ENCODE measurements at regions of chr16 and their contacts with region 1.

Region 1: GRCh38 chr16:57600048-57600835 is 28.2 kb upstream of the ADGRG1 start:
- DNase-seq: peak; percentile 45 to 52
- ATAC-seq: peak; percentile 58 to 94 (median 86)
- H3K4me3 ChIP-seq: no peak overlapping the region
- H3K27ac ChIP-seq: peak overlapping the region in 1 of 10 donors; percentile 75
- H3K4me1 ChIP-seq: peaks cover 0 to 36% (median 0%) of the 10 kb centered on the region in 9 donors
- H3K27me3 ChIP-seq: peaks cover 0 to 28% (median 0%) of the 10 kb centered on the region in 7 donors
- CTCF ChIP-seq: peak; percentile 52 to 80 (median 72)

Region 2: DNA sequence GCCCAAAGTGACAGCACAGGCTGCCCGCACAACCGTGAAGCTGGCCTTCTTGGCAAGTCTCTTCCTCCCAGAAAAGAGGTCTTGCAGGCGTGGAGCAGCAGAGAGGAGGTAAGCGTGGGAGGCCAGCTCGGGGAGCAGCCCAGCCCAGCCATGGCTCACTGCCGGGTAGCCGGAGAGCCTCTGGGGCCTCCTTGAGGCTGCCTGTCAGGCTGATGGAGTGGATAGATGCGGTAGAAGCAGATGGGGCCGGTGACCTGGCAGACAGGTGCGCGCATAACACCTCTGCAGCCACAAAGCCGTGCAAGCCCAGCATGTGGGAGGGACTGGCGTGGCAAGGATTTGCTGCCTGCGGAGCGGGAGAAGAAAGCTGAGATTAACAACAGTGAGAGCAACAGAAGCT is 96.9 kb before region 1 on chr16:
- intact Hi-C with region 1: no loop called
- DNase-seq: no peak
- ATAC-seq: peak in 1 of 8 donors; percentile 37
- H3K4me3 ChIP-seq: no peak overlapping the region
- H3K27ac ChIP-seq: no peak overlapping the region
- H3K4me1 ChIP-seq: peaks cover 0 to 13% (median 0%) of the 10 kb centered on the region in 9 donors
- H3K27me3 ChIP-seq: no peaks in the 10 kb centered on the region
- CTCF ChIP-seq: no peak

Region 3: GRCh38 chr16:57648590-57649442 is 48.6 kb after region 1 on chr16:
- intact Hi-C with region 1: loop called in 5 of 10 experiments (anchors 2 to 5 kb)
- DNase-seq: peak; percentile 73 to 79
- ATAC-seq: peak; percentile 32 to 50 (median 45)
- H3K4me3 ChIP-seq: peak overlapping the region in 1 of 10 donors; percentile 4
- H3K27ac ChIP-seq: peak overlapping the region; percentile 78 to 93 (median 86)
- H3K4me1 ChIP-seq: peaks cover 9 to 58% (median 39%) of the 10 kb centered on the region in 9 donors
- H3K27me3 ChIP-seq: peaks cover 0 to 14% (median 0%) of the 10 kb centered on the region in 7 donors
- CTCF ChIP-seq: peak; percentile 99 to 100 (median 100)

Region 4: GRCh38 chr16:57653936-57654335 is 53.7 kb after region 1 on chr16:
- intact Hi-C with region 1: loop called in 5 of 10 experiments (anchors 2 to 5 kb)
- DNase-seq: no peak
- ATAC-seq: peak in 6 of 8 donors; percentile 21 to 71 (median 51)
- H3K4me3 ChIP-seq: no peak overlapping the region
- H3K27ac ChIP-seq: peak overlapping the region in 1 of 10 donors; percentile 54
- H3K4me1 ChIP-seq: peaks cover 0 to 14% (median under 1%) of the 10 kb centered on the region in 9 donors
- H3K27me3 ChIP-seq: peaks cover 0 to 4% (median 0%) of the 10 kb centered on the region in 7 donors
- CTCF ChIP-seq: no peak

Region 5: DNA sequence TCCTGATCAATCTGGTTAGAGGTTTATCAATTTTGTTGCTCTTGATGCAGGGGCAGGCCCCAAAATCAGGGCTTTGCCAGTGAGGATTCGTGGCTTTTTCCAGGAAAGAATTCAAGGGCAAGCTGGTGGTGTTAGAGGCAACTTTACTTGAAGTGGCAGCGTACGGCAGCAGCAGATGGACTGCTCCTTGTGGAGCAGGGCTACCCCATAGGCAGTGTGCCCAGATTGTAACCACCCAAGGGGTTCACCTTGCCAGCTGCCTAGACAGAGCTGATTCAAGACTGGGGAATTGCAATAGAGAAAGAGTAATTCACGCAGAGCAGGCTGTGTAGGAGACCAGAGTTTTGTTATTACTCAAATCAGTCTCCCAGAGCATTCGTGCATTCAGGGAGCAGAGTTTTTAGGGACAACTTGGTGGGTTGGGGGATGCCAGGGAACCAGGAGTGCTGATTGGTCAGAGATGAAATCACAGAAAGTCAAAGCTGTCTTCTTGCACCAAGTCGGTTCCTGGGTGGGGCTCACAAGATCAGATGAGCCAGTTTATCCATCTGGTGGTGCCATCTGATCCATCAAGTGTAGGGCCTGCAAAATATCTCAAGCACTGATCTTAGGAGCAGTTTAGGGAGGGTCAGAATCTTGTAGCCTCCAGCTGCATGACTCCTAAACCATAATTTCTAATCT is 111.2 kb after region 1 on chr16:
- intact Hi-C with region 1: loop called in 1 of 10 experiments (anchors 10 kb)
- DNase-seq: no peak
- ATAC-seq: no peak
- H3K4me3 ChIP-seq: no peak overlapping the region
- H3K27ac ChIP-seq: no peak overlapping the region
- H3K4me1 ChIP-seq: no peaks in the 10 kb centered on the region
- H3K27me3 ChIP-seq: peaks cover 0 to 11% (median 0%) of the 10 kb centered on the region in 7 donors
- CTCF ChIP-seq: no peak

Measured in heart right ventricle (tissue), 16 donors.